GM13977 (cell line): ENCODE measurements at regions of chr17 and their contacts with region 1.

Region 1: GRCh38 chr17:17636272-17636885 is 44.9 kb upstream of the PEMT start:
- DNase-seq: no peak
- CTCF ChIP-seq: no peak

Region 2: DNA sequence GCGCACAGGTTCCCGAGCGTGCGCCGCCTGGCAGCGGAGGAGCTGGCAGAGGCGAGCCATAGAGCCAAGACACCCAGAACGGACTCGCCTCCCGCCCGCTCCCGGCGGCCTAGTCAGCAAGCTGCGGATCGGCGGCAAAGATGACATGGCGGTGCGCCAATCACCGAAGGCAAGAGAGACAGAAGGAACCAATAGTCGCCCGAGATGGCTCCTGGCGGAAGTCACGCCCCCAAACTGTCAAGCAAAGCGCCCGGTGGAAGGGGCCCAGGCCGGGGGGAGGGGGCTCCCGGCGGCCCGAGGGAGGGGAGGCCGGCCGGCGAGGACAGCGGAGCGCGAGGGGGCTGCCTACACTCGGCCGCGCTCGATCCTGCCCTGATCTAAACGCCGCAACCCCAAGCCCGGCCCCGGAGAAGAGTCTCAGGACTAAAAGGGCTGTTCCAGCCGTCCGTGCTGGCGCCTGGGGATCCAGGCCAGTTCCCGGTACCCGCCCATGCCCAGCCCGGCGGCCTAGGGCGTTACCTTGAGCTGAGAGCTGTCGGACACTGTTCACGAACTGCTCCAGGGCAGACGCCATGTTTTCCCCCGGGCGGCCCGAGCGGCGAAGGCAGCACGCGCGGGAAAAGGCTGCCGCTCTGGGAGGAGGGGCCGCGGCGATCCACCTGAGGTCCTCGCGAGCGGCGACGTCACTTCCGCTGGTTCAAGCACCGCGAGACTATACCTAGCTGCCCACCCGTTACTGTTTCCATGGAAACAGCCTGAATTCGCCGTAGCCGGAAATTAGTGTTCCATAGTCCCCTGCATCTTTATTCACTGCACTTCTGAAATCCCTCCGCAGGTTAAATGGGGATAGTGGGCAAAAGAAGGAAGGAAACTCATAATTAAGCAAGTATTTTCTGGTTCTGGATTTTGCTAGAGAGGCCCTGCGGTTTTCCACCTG is 355.5 kb before region 1 on chr17 and contains the start of gene COPS3:
- in situ Hi-C with region 1: no loop called
- DNase-seq: peak; percentile 97
- CTCF ChIP-seq: no peak

Region 3: DNA sequence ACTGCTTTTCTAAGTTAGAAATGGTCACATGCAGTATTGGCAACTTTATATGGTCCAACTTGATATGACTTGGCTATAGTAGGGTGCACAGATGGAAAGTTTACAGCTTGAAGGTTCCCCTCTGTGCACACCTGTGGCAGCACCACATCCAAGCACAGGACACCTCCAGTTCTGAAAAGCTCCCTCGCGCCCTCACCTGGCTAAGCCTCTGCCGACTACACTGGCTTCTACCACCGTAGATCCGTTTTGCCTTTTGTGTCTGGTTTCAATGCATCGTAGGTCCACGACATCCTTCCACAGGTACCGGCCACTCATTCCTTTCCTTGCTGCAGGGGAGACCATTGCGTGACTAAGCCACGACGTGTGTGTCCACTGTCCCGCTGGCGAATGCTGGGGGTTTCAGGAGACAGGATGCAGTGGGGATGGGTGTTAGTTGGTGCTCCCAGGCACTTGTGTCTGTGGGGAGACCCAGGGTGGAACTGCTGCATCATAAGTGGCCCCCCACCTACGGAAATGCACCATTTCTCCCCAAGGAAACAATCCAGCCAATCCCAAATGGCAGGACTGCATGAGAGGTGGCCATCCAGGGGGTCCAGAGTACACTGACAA is 135.3 kb before region 1 on chr17:
- in situ Hi-C with region 1: loop called (anchors 10 kb)
- DNase-seq: no peak
- CTCF ChIP-seq: no peak

Region 4: GRCh38 chr17:17888821-17889220 is 252.4 kb after region 1 on chr17:
- in situ Hi-C with region 1: no loop called
- DNase-seq: no peak
- CTCF ChIP-seq: no peak